Testis (tissue), 5 donors: ENCODE measurements at regions of chr20 and their contacts with region 1.

Region 1: GRCh38 chr20:38242848-38243449 is 17.6 kb downstream of the KIAA1755 start:
- DNase-seq: peak; percentile 62
- H3K4me3 ChIP-seq: no peak overlapping the region
- H3K27ac ChIP-seq: no peak overlapping the region
- H3K4me1 ChIP-seq: peaks cover 15% of the 10 kb centered on the region
- H3K27me3 ChIP-seq: no peaks in the 10 kb centered on the region
- CTCF ChIP-seq: peak; percentile 16 to 56 (median 20)
- POLR2A ChIP-seq: no peak

Region 2: DNA sequence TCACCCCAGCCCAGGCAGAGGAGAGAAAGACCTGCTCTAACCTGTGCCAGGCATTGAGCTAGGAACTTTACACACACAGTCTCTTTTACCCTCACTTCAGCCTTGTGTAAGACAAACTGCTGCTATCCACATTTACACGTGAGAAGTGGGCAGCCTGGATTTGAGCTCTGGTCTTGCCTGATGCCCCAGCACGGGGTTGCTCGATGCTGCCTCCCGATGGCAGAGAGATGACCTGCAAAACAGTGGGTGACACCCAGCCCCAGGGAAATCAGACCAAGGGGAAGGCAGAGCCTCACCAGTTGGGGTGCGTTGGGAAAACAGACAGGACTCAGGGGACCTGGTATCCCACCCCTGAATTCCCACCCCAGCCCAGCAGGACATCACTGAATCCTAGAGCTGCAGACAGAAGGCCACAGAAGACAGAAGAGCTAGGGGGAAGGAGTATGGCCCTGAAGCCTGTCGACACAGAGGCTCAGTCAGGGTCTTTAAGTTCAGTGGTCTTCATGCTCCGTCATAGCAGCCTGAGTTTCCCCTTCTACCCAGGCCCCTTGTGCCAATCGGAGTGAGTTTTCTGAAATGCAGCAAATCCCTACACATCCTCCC is 62.0 kb after region 1 on chr20:
- intact Hi-C with region 1: loop called (anchors 10 kb)
- DNase-seq: no peak
- H3K4me3 ChIP-seq: no peak overlapping the region
- H3K27ac ChIP-seq: no peak overlapping the region
- H3K4me1 ChIP-seq: peaks cover 5% of the 10 kb centered on the region
- H3K27me3 ChIP-seq: no peaks in the 10 kb centered on the region
- CTCF ChIP-seq: peak in 2 of 3 experiments; percentile 7 to 29
- POLR2A ChIP-seq: no peak

Region 3: DNA sequence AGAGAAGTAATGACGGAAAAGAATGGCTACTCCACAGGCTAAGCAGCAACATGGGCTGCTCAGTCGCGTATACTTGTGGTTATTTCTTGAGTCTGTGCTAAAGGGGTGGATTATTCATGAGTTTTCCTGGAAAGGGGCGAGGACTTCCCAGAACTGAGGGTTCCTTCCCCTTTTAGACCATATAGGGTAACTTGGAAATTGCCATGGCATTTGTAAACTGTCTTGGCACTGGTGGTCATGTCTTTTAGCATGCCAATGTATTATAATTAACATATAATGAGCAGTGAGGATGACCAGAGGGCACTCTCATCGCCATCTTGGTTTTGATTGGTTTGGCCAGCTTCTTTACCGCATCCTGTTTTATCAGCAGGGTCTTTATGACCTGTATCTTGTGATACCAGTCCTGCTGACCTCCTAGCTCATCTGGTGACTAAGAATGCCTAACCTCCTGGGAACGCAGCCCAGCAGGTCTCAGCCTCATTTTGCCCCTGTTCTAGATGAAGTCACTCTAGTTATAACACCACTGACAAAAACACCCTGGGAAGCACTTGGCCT is 114.8 kb after region 1 on chr20:
- intact Hi-C with region 1: no loop called
- DNase-seq: no peak
- H3K4me3 ChIP-seq: no peak overlapping the region
- H3K27ac ChIP-seq: no peak overlapping the region
- H3K4me1 ChIP-seq: no peaks in the 10 kb centered on the region
- H3K27me3 ChIP-seq: no peaks in the 10 kb centered on the region
- CTCF ChIP-seq: no peak
- POLR2A ChIP-seq: no peak